ENCODE measurements at regions of chr7 and their contacts with region 1.

Region 1: GRCh38 chr7:101363734-101364374 is 1.2 kb downstream of the COL26A1 start:
- DNase-seq: peak; percentile 77
- ATAC-seq: peak; percentile 94
- H3K4me3 Mint-ChIP-seq: no peak overlapping the region
- H3K27ac Mint-ChIP-seq: no peak overlapping the region
- H3K4me1 Mint-ChIP-seq: peaks cover 17% of the 10 kb centered on the region
- H3K27me3 Mint-ChIP-seq: peaks cover 25% of the 10 kb centered on the region

Region 2: GRCh38 chr7:101436857-101437576 is 73.2 kb after region 1 on chr7:
- CTCF ChIA-PET with region 1: interaction called, 18 read pairs
- POLR2A ChIA-PET with region 1: no interaction called
- DNase-seq: no peak
- ATAC-seq: no peak
- H3K4me3 Mint-ChIP-seq: no peak overlapping the region
- H3K27ac Mint-ChIP-seq: no peak overlapping the region
- H3K4me1 Mint-ChIP-seq: peaks cover 5% of the 10 kb centered on the region
- H3K27me3 Mint-ChIP-seq: peaks cover 18% of the 10 kb centered on the region

Region 3: DNA sequence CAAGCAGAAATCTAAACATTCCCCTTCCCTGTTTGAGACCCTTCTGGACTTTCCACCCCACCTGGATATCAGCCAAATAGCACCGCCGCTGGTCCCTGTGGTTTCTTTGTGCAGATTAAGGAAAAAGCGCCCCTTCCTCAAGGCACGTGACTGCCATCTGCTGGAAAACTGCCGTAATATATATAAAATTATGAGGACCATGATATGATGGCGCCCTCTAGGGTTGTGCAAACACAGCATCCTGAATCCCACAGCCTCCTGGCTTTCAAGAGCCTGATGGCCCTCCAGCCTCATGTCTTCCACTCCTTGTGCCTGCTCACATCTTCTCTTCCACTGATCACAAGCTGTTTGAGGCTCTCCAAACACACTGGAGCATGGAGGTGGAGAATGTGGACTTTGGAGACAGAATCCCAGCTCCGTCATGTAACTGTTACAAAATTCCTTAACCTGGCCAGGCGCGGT is 144.0 kb after region 1 on chr7:
- CTCF ChIA-PET with region 1: interaction called, 31 read pairs
- POLR2A ChIA-PET with region 1: interaction called, 3 read pairs
- DNase-seq: peak; percentile 74
- ATAC-seq: peak; percentile 60
- H3K4me3 Mint-ChIP-seq: peak overlapping the region; percentile 52
- H3K27ac Mint-ChIP-seq: peak overlapping the region; percentile 5
- H3K4me1 Mint-ChIP-seq: peaks cover 37% of the 10 kb centered on the region
- H3K27me3 Mint-ChIP-seq: peaks cover 9% of the 10 kb centered on the region

Measured in activated CD8-positive, alpha-beta T cell treated with anti-CD3 and anti-CD28 coated beads, Interleukin-2, amount 10 ng/mL, durations not matched to agents 7 days and 5 days (primary cell).